Motor neuron (in vitro differentiated cells): ENCODE measurements at regions of chr16 and their contacts with region 1.

Region 1: DNA sequence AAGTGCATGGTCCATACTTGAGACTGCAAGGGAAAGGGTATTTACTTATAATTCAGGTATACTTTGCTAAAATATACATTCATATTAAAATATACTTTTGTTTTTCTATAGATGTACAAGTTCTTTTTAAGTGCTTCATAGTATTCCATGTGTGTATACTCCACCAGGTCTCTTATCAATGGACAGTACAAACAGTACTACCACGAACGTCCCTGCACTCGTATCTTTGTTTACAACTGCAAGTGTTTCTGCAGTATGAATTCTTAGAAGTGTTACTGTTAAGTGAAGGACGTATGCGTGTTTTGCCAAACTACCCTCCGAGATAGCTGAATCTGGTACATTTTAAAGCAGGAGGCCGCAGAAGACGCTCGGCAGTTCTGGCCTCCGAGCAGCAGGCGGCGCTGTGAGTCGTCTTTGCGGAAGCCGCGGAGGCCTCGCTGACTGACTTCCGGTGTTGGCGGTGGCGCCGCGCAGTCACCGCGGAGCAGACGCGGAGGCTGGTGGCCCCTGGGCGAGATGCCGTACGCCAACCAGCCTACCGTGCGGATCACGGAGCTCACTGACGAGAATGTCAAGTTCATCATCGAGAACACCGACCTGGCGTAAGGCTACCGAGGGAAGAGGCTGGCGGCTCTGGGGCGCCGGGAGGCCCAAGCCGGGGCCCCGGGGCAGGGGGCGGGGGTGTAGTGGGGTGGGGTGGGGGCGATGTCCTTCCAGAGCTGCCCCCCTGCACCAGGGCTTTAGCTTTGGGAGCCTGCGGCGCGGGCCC is at the start of gene POLR2C:
- ATAC-seq: peak; percentile 89 to 98 (median 93)
- H3K4me3 ChIP-seq: peak within 1 kb of the TSS; percentile 59 to 98 (median 87)
- H3K27ac ChIP-seq: peak within 1 kb of the TSS; percentile 92 to 94
- H3K4me1 ChIP-seq: peaks cover 5% of the 10 kb centered on the region in 2 donors
- total RNA-seq, gene POLR2C: 49.4 to 82.9 (median 64.9) TPM

Region 2: DNA sequence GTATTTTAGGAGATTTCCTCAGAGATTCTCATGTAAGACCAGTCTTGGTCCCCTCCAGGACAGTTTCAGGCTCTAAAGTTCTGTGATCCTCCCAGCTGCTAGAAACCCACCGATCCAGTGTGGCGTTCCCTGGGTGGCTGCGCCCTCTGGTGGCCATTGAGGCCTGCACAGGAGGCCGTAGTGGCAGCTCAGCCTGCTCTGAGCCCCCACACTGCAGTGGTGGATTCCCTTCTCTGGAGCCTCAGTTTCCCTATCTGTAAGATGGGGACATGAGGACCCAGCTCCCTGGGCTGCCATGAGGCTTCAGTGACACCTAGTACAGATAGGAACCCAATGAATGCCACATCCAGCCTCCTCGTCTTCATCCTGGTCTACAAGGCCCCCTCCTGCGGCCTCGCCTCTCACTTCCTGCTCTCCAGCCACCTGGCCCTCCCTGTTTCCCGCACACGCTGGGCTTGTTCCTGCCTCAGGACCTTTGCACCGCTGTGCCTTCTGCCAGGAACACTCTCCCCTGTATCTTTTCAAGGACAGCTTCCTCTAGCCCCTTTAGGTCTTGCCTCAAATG is 57.5 kb after region 1 on chr16:
- in situ Hi-C with region 1: loop called in 1 of 9 experiments (anchors 10 kb)
- ATAC-seq: peak; percentile 74 to 98 (median 92)
- H3K4me3 ChIP-seq: no peak overlapping the region
- H3K27ac ChIP-seq: no peak overlapping the region
- H3K4me1 ChIP-seq: no peaks in the 10 kb centered on the region

Region 3: DNA sequence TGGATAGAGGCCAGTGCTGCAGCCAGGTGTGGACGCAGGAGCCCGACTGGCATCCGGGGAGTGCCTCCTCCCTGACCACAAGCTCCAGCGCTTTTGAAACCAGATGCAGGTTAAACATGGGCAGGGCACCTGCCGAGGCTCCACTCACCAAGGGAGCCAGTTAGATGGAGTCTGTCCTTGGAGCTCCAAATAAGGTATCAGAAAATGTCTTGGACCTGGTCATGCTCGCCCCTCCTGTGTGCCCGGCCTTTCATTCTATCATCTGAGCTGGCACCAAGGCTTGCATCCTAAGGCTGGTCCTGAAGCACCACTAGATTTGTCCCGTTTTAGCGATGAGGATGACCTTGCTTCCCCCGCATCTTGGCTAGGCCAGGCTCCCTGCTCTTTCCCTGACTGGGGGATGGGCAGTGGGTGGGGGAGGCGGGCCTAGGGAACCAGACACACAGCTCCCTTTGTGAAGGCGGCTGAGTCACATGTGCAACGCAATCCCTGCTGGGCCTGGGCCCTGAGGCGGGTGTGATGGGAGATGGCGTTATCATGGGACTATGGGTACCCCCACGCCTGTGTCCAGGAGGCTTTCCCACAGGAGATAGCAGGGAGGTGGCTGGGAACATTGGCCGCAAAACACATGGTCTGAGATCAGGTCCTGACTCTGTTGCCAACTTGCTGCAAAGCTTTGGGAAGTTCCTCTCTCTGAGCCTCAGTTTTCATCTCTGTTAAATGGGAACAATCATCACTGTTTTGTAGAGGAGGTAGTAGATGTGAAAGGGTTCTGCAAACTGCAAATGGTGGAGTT is 161.1 kb after region 1 on chr16:
- in situ Hi-C with region 1: no loop called
- ATAC-seq: no peak
- H3K4me3 ChIP-seq: no peak overlapping the region
- H3K27ac ChIP-seq: no peak overlapping the region
- H3K4me1 ChIP-seq: peaks cover 48 to 65% of the 10 kb centered on the region in 2 donors